Activated CD4-positive, alpha-beta T cell treated with anti-CD3 and anti-CD28 coated beads for 36 hours (primary cell): ENCODE measurements at regions of chr2 and their contacts with region 1.

Region 1: DNA sequence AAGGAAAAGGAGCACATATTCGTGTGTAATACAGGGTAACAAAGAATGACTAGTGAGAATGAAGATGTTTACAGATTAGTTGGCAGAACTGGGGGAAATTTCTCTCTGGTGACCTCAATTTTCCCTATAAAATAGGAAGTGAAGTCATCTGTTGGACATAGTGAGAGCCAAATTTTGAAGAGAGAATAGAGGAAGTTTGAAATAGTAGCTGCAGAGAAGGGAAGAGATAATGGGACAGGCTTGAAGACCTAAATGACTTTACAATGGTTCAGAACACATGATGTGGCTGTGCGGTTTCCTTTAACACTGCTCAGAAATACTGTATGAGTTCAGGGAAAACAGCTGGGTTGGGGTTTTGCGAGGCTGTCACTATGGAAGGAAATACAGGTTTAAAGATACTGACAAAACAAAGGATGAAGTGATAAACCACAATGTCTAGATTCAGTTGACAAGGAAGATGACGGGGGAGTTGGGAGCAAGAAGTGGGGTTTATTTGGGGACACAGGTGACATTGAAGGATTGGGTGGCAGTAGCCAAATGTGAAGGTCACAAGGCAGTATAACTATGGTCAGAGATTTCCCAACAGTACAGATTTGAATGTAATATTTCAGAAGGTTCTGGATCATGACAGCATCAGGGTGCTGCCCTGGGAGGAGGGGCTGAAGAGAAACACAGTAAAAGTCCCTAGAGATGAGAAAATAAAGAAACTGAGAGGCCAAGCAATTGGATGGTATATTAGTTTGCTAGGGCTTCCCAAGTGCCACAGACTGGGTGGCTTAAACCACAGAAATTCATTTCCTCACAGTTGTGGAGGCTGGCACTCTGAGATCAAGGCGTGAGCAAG is 82.6 kb upstream of the TANK start:
- DNase-seq: peak; percentile 85
- ATAC-seq: peak; percentile 84
- H3K4me3 Mint-ChIP-seq: peak overlapping the region; percentile 42
- H3K27ac Mint-ChIP-seq: peak overlapping the region; percentile 88
- H3K4me1 Mint-ChIP-seq: peaks cover 44% of the 10 kb centered on the region
- H3K27me3 Mint-ChIP-seq: no peaks in the 10 kb centered on the region

Region 2: DNA sequence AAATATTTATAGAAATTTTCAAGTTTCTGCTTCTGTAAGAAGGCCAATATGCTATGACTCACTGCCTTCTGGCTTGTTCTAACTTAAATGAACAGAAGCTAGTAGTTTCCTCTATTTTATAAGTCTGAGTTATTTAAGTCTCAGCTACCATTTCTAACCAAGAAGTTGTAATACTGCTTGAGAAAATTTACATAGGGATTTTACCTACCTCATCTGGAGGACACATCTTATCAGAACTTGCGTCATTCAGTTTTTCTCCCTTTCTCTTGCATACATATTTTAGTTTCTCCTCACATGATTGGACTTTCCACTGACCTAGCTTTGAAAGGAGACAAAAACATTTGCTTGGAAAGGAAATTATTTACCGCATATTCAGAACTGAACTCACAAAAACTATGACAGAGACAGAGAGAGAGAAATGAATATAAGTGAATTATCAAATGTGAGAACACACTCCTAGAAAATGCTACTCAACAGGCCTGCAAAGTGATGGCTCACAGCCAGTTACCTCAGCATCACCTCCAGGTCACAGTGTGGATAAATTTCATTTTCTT is 1198.5 kb before region 1 on chr2:
- CTCF ChIA-PET with region 1: no interaction called
- POLR2A ChIA-PET with region 1: no interaction called
- intact Hi-C with region 1: loop called in 1 of 2 experiments (anchors 5 kb)
- DNase-seq: peak; percentile 74
- ATAC-seq: peak; percentile 87
- H3K4me3 Mint-ChIP-seq: no peak overlapping the region
- H3K27ac Mint-ChIP-seq: peak overlapping the region; percentile 76
- H3K4me1 Mint-ChIP-seq: peaks cover 62% of the 10 kb centered on the region
- H3K27me3 Mint-ChIP-seq: no peaks in the 10 kb centered on the region

Region 3: GRCh38 chr2:160324161-160324800 is 753.3 kb before region 1 on chr2:
- CTCF ChIA-PET with region 1: no interaction called
- POLR2A ChIA-PET with region 1: no interaction called
- intact Hi-C with region 1: loop called (anchors 10 kb)
- DNase-seq: peak; percentile 71
- ATAC-seq: no peak
- H3K4me3 Mint-ChIP-seq: no peak overlapping the region
- H3K27ac Mint-ChIP-seq: peak overlapping the region; percentile 39
- H3K4me1 Mint-ChIP-seq: peaks cover 85% of the 10 kb centered on the region
- H3K27me3 Mint-ChIP-seq: no peaks in the 10 kb centered on the region

Region 4: DNA sequence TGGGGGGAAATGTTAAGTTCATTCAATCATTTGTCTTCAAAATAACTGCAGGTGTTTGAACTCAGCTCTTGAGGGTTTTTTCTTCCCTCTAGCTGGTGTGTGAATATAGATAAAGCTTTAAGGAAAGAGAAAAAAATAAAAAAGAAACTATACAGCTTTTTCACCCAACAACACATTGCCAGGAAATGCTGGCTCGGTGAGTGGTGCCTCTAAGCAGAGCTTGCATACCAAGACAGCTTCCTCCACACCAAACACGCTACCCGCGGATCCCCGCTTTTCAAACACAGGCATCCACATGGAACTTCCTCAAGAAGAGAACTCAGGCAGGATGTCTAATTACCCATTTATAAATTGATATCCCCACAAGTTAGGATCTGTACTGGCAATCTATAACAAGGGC is 12.8 kb after region 1 on chr2:
- CTCF ChIA-PET with region 1: interaction called, 11 read pairs
- POLR2A ChIA-PET with region 1: interaction called, 3 read pairs
- intact Hi-C with region 1: no loop called
- DNase-seq: peak; percentile 50
- ATAC-seq: peak; percentile 84
- H3K4me3 Mint-ChIP-seq: peak overlapping the region; percentile 29
- H3K27ac Mint-ChIP-seq: peak overlapping the region; percentile 49
- H3K4me1 Mint-ChIP-seq: peaks cover 29% of the 10 kb centered on the region
- H3K27me3 Mint-ChIP-seq: peaks cover 2% of the 10 kb centered on the region

Region 5: DNA sequence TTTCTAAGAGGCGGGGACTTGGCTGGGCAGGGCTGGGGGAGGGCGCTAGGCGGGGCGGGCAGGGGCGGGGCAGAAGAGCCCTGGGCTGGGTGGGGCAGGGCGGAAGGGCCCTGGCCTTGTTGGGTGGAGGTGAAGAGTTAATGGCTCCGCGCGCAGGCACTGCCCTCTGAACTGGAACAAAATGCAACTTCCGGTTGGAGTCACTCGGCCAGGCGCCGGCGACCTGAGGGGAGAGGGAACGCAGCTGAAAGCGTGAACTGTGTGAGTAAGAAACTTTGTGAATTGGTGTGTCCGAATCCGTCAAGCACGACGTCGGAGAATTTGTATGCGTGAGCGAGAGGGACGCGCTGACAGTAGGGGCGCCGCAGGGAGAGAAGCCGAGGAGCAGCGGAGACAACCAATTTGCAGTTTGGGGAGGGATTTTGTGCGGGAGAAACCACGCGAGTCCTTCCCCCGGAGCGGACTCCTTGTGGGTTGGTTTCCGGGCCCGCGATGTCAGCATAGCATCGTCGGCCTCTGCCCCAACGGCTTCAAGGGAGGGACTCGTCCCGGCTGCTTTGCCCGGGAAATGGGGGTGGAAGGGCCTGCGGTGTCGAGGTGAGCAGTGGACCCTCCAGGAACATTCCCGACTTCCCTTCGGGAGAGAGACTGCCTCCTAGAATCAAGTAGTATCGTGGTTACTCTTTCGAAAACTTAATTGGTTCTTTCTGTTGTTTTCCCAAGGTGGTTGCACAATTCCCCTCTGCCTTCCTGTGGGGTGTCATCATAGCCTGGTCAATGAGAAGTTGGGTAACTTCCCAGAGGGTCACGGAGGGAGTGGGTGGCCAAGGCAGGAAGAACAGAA is 82.9 kb after region 1 on chr2 and contains the start of gene TANK:
- CTCF ChIA-PET with region 1: no interaction called
- POLR2A ChIA-PET with region 1: no interaction called
- intact Hi-C with region 1: loop called (anchors 1 kb)
- DNase-seq: peak; percentile 95
- ATAC-seq: peak; percentile 95
- H3K4me3 Mint-ChIP-seq: peak within 1 kb of the TSS; percentile 91
- H3K27ac Mint-ChIP-seq: peak within 1 kb of the TSS; percentile 99
- H3K4me1 Mint-ChIP-seq: peaks cover 52% of the 10 kb centered on the region
- H3K27me3 Mint-ChIP-seq: no peaks in the 10 kb centered on the region
- total RNA-seq, gene TANK: 54.6 to 59.7 TPM

Region 6: GRCh38 chr2:161308178-161308955 is 230.8 kb after region 1 on chr2 and contains the start of gene PSMD14:
- CTCF ChIA-PET with region 1: no interaction called
- POLR2A ChIA-PET with region 1: interaction called, 3 read pairs
- intact Hi-C with region 1: loop called in 1 of 2 experiments (anchors 2 kb)
- DNase-seq: peak; percentile 96
- ATAC-seq: peak; percentile 91
- H3K4me3 Mint-ChIP-seq: peak within 1 kb of the TSS; percentile 87
- H3K27ac Mint-ChIP-seq: peak within 1 kb of the TSS; percentile 93
- H3K4me1 Mint-ChIP-seq: peaks cover 28% of the 10 kb centered on the region
- H3K27me3 Mint-ChIP-seq: no peaks in the 10 kb centered on the region
- total RNA-seq, gene PSMD14: 69.5 to 85.7 TPM